Posterior cingulate gyrus (tissue), 11 donors: ENCODE measurements at regions of chr20 and their contacts with region 1.

Region 1: GRCh38 chr20:2451939-2452732 is 18.5 kb downstream of the SNRPB start:
- DNase-seq: peak; percentile 56 to 94 (median 80)

Region 2: GRCh38 chr20:1764136-1765033 is 687.8 kb before region 1 on chr20:
- intact Hi-C with region 1: loop called (anchors 10 kb)
- DNase-seq: peak; percentile 61 to 96 (median 80)

Region 3: GRCh38 chr20:1965520-1966351 is 486.4 kb before region 1 on chr20:
- intact Hi-C with region 1: loop called (anchors 5 kb)
- DNase-seq: peak; percentile 59 to 97 (median 83)

Region 4: GRCh38 chr20:2206957-2207769 is 245.0 kb before region 1 on chr20:
- intact Hi-C with region 1: loop called (anchors 1 kb)
- DNase-seq: peak; percentile 57 to 97 (median 77)

Region 5: GRCh38 chr20:2349818-2350508 is 102.2 kb before region 1 on chr20:
- intact Hi-C with region 1: loop called (anchors 1 kb)
- DNase-seq: no peak

Region 6: GRCh38 chr20:2879146-2879545 is 427.0 kb after region 1 on chr20:
- intact Hi-C with region 1: no loop called
- DNase-seq: peak in 8 of 10 donors; percentile 40 to 94 (median 60)